ENCODE measurements at regions of chr12 and their contacts with region 1.

Region 1: GRCh38 chr12:94459728-94460615 is at the start of gene CEP83:
- DNase-seq: peak; percentile 89 to 99 (median 98)
- ATAC-seq: peak; percentile 97
- H3K4me3 ChIP-seq: peak within 1 kb of the TSS; percentile 96
- H3K4me3 Mint-ChIP-seq: peak within 1 kb of the TSS; percentile 94
- H3K27ac ChIP-seq: peak within 1 kb of the TSS; percentile 69 to 87
- H3K27ac Mint-ChIP-seq: peak within 1 kb of the TSS; percentile 92
- H3K4me1 ChIP-seq: peaks cover 10% of the 10 kb centered on the region
- H3K4me1 Mint-ChIP-seq: peaks cover 31% of the 10 kb centered on the region
- H3K27me3 ChIP-seq: no peaks in the 10 kb centered on the region
- H3K27me3 Mint-ChIP-seq: peaks cover 8% of the 10 kb centered on the region
- CTCF ChIP-seq: no peak
- total RNA-seq, gene CEP83: 9.4 to 12.1 TPM

Region 2: GRCh38 chr12:93441617-93442410 is 1018.2 kb before region 1 on chr12 and contains the start of gene UBE2N:
- CTCF ChIA-PET with region 1: no interaction called
- POLR2A ChIA-PET with region 1: no interaction called
- intact Hi-C with region 1: loop called in 1 of 2 experiments (anchors 2 kb)
- DNase-seq: peak; percentile 92 to 98 (median 95)
- ATAC-seq: peak; percentile 81
- H3K4me3 ChIP-seq: peak within 1 kb of the TSS; percentile 76
- H3K4me3 Mint-ChIP-seq: peak within 1 kb of the TSS; percentile 96
- H3K27ac ChIP-seq: peak within 1 kb of the TSS; percentile 89 to 91
- H3K27ac Mint-ChIP-seq: peak within 1 kb of the TSS; percentile 93
- H3K4me1 ChIP-seq: peaks cover 29% of the 10 kb centered on the region
- H3K4me1 Mint-ChIP-seq: peaks cover 53% of the 10 kb centered on the region
- H3K27me3 ChIP-seq: no peaks in the 10 kb centered on the region
- H3K27me3 Mint-ChIP-seq: no peaks in the 10 kb centered on the region
- CTCF ChIP-seq: no peak
- total RNA-seq, gene UBE2N: 89.8 to 101 TPM

Region 3: GRCh38 chr12:94262228-94263010 is 197.6 kb before region 1 on chr12:
- CTCF ChIA-PET with region 1: no interaction called
- POLR2A ChIA-PET with region 1: interaction called, 9 read pairs
- intact Hi-C with region 1: loop called in 1 of 2 experiments (anchors 10 kb)
- DNase-seq: peak; percentile 50 to 86 (median 66)
- ATAC-seq: peak; percentile 90
- H3K4me3 ChIP-seq: peak overlapping the region; percentile 82
- H3K4me3 Mint-ChIP-seq: peak overlapping the region; percentile 98
- H3K27ac ChIP-seq: peak overlapping the region; percentile 89 to 92
- H3K27ac Mint-ChIP-seq: peak overlapping the region; percentile 99
- H3K4me1 ChIP-seq: peaks cover 31% of the 10 kb centered on the region
- H3K4me1 Mint-ChIP-seq: peaks cover 46% of the 10 kb centered on the region
- H3K27me3 ChIP-seq: no peaks in the 10 kb centered on the region
- H3K27me3 Mint-ChIP-seq: no peaks in the 10 kb centered on the region
- CTCF ChIP-seq: no peak

Region 4: DNA sequence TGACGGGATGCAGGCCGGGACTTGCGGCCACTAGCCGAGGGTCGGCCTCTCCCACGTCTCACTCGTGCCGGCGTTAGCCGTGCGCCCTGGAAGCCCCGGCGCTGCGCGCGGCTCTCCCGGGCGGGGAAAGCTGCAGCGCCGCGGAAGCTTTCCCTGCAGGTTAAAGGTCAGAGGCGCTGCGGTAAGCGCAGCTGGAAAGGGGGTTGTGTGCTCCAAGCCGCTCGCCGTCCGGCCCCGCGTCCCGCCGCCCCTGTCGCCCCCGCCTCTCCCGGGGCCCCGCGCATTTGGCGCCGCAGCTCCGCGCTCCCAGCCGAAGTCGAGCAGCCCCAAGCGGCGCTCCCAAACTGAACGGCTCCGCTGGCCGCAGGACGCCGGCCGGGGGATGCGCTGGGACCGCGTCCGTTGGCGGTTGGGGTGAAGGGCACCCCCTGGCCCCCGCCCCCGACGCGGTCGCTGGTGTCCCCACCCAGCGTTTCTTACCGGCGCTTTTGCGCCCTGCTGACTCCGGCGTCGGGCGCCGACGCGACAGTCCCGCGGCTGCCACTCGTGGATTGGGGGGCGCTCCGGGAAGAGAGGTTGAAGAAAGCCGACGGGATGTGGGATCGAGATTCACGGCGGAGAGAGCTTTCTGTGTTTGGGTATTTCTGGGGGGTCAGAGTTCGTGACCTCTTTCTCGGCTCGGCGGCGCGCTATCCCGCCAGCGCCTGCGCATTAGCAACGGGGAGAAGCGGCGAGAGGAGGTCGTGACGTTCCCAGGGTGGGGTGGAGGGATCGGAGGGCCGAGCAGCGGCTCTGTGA is 613.1 kb after region 1 on chr12 and contains the start of gene NR2C1:
- CTCF ChIA-PET with region 1: no interaction called
- POLR2A ChIA-PET with region 1: no interaction called
- intact Hi-C with region 1: loop called in 1 of 2 experiments (anchors 10 kb)
- DNase-seq: peak; percentile 85 to 97 (median 90)
- ATAC-seq: peak; percentile 98
- H3K4me3 ChIP-seq: peak within 1 kb of the TSS; percentile 84
- H3K4me3 Mint-ChIP-seq: peak within 1 kb of the TSS; percentile 98
- H3K27ac ChIP-seq: peak within 1 kb of the TSS; percentile 62 to 72
- H3K27ac Mint-ChIP-seq: peak within 1 kb of the TSS; percentile 89
- H3K4me1 ChIP-seq: peaks cover 17% of the 10 kb centered on the region
- H3K4me1 Mint-ChIP-seq: peaks cover 23% of the 10 kb centered on the region
- H3K27me3 ChIP-seq: no peaks in the 10 kb centered on the region
- H3K27me3 Mint-ChIP-seq: no peaks in the 10 kb centered on the region
- CTCF ChIP-seq: no peak
- total RNA-seq, gene NR2C1: 48.3 to 58.9 TPM

Region 5: DNA sequence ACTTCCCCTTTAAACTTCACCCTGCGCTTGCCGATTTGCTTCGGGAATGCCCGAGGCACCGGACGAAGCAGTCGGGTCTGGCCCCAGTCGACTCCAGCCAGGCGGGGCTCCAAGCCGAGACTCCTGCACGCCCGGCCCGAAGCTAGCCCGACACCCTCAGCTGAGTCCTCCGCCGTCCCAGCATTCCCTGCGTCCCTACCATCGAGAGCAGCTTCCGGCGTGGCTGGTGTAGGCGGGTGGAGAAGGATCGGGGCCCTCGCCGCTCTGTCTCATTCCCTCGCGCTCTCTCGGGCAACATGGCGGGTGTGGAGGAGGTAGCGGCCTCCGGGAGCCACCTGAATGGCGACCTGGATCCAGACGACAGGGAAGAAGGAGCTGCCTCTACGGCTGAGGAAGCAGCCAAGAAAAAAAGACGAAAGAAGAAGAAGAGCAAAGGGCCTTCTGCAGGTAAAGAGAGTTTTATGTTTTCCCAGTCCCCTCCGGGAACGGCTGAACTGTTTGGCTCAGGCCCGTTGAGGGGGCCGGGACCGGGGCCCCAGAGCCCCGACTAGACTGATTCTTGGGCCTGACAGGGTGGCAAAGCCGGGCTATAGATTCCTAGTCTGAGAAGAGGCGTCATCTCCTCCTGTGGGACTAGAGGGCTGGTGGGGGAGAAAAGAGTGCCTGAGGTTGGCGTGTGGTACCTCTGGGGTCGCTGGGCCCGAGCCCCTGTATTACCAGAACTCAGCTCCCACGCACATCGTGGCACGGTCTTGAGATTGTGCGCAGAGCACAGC is 1014.1 kb after region 1 on chr12 and contains the start of gene METAP2:
- CTCF ChIA-PET with region 1: no interaction called
- POLR2A ChIA-PET with region 1: no interaction called
- intact Hi-C with region 1: loop called in 1 of 2 experiments (anchors 10 kb)
- DNase-seq: peak; percentile 82 to 95 (median 88)
- ATAC-seq: peak; percentile 96
- H3K4me3 ChIP-seq: peak within 1 kb of the TSS; percentile 92
- H3K4me3 Mint-ChIP-seq: peak within 1 kb of the TSS; percentile 100
- H3K27ac ChIP-seq: peak within 1 kb of the TSS; percentile 56 to 79
- H3K27ac Mint-ChIP-seq: peak within 1 kb of the TSS; percentile 92
- H3K4me1 ChIP-seq: peaks cover 32% of the 10 kb centered on the region
- H3K4me1 Mint-ChIP-seq: peaks cover 67% of the 10 kb centered on the region
- H3K27me3 ChIP-seq: no peaks in the 10 kb centered on the region
- H3K27me3 Mint-ChIP-seq: no peaks in the 10 kb centered on the region
- CTCF ChIP-seq: no peak
- total RNA-seq, gene METAP2: 60.2 to 66.3 TPM

Measured in CD4-positive, alpha-beta T cell (primary cell).